GM10248 (cell line): ENCODE measurements at regions of chr11 and their contacts with region 1.

Region 1: DNA sequence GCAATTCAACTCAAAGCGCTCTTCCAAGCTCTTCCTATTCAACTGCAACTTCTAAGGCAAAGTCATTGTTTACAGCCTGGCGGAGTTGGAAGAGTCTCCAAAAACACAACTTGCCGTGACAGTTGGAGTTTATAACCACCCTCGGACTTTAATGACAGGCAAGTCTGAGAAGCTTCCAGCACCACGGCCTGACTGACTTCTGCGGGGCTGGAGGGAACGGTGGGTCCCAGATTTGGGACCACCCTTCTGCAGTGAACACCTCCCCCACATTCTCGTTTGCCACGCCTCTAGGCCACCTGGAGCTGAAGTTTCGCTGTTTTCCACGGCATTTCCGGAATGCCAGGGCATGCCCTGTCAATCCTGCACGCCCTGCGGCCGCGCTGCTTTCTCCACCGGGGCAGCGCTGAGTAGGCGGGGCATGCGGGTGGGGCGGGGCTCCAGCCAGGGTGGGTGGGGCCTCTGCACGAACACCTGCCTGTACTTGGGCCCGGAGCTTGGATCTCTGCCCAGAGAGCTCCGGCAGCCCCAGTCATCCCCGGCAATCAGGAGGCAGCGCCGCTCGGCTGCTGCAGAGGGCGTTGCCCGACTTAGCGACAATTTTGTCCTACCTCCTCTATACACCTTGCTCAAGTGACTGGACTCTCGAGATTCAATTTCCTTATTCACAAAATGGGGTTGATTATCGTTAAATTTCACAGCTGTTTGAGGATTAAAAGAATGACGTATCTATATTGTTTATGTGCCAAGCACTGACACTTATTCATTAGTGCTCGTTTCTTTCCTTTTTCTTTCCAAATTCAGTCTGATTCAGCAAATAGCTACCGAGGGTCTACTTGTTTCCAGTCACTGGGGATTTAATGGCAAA is 48.7 kb upstream of the BIRC3 start:
- DNase-seq: peak; percentile 91
- CTCF ChIP-seq: peak; percentile 51

Region 2: DNA sequence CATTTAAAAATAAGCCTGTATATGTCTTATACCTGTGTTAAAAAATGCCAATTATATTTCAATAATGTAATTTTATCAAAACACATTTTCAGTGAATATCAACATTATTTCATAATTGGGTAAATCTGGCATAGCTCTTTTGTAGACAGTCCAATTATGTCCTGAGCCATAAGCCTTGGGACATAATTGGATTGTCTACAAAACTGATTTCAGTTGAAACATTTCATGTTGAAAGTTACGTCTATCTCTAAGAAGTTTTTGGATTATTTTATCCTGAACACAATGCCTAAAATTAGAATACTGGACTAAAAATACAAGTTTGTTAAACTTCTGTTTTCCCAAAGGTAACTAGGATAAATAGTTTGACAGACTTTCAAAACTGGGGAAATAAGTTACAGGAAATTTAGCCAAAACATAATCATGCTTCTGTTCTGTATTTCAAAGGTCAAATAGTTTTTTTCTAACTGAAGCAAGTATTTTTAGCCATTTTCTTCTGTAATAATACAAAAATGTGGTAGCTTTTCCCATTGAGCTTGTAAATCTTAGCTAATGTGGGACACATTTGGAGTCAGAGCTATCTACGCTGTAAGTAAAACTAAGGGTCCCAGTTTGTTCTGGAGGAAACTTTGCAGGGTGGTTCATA is 52.0 kb before region 1 on chr11:
- CTCF ChIA-PET with region 1: no interaction called
- POLR2A ChIA-PET with region 1: no interaction called
- DNase-seq: no peak
- CTCF ChIP-seq: no peak

Region 3: DNA sequence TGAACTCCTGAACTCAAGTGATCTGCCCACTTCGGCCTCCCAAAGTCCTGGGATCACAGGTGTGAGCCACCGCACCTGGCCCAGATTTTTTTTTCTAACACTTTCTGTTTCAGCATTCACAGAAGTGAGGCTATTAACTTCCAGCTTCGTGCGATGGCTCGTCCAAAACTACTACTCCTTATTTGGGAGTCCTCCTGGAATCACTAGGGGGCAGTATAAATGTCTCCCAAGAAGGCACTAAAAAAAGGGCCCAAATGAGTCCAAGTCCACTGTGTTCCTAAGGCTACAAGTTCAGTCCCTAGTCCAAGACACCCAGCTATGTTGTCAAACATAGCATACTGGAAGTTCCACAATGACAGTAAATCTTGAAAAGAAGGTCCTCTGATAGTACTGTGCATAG is 14.5 kb before region 1 on chr11:
- CTCF ChIA-PET with region 1: interaction called, 17 read pairs
- POLR2A ChIA-PET with region 1: no interaction called
- DNase-seq: no peak
- CTCF ChIP-seq: peak; percentile 27

Region 4: DNA sequence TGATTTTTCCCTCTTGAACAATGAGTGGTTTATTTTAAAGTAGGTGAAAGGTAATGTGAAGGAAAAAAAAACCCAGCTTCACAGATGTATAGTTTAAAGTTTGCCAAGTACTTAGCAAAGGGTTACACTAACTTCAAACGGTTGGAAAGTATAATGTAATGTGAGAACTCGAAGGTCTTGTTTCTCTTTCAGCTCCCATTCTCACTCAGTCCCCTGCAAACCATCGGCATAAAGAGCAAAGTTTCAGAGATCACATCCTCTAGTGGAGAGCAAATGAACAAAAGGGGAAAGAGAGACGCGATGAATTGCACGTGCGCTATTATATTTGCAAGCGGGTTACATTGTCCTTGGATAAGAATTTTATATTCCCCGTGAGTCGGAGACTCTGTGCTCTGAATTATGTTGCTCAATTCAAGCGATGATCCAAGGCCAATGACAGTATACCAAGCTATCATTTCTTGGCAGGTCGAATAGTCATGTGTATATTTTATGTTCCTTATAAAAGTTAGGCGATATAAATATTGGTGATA is 11.1 kb after region 1 on chr11:
- CTCF ChIA-PET with region 1: interaction called, 21 read pairs
- POLR2A ChIA-PET with region 1: no interaction called
- DNase-seq: peak; percentile 60
- CTCF ChIP-seq: peak; percentile 0